H1 (cell line): ENCODE measurements at regions of chr3 and their contacts with region 1.

Region 1: GRCh38 chr3:141386611-141387111 is 18.4 kb downstream of the ZBTB38 start:
- DNase-seq: no peak
- H3K4me3 ChIP-seq: no peak overlapping the region
- H3K27ac ChIP-seq: no peak overlapping the region
- H3K4me1 ChIP-seq: peaks cover 0 to 11% (median 5%) of the 10 kb centered on the region in 4 experiments; a peak in 4 of 7 replicates
- H3K27me3 ChIP-seq: no peaks in the 10 kb centered on the region
- CTCF ChIP-seq: no peak
- EP300 ChIP-seq: no peak
- POLR2A ChIP-seq: no peak
- RAD21 ChIP-seq: no peak

Region 2: GRCh38 chr3:141370065-141370533 is 16.6 kb before region 1 on chr3:
- CTCF ChIA-PET with region 1: interaction called, 15 read pairs
- POLR2A ChIA-PET with region 1: interaction called, 4 read pairs
- DNase-seq: no peak
- H3K4me3 ChIP-seq: no peak overlapping the region
- H3K27ac ChIP-seq: no peak overlapping the region
- H3K4me1 ChIP-seq: peaks cover 2 to 13% (median 8%) of the 10 kb centered on the region in 4 experiments
- H3K27me3 ChIP-seq: no peaks in the 10 kb centered on the region
- CTCF ChIP-seq: peak; percentile 5 to 50 (median 35)
- EP300 ChIP-seq: 0 out of 3 replicates have a peak, but pooled peaks of 1 of the 2 experiments have one; percentile 31
- POLR2A ChIP-seq: no peak
- RAD21 ChIP-seq: peak; percentile 21 to 46; a peak in 2 of 4 replicates

Region 3: DNA sequence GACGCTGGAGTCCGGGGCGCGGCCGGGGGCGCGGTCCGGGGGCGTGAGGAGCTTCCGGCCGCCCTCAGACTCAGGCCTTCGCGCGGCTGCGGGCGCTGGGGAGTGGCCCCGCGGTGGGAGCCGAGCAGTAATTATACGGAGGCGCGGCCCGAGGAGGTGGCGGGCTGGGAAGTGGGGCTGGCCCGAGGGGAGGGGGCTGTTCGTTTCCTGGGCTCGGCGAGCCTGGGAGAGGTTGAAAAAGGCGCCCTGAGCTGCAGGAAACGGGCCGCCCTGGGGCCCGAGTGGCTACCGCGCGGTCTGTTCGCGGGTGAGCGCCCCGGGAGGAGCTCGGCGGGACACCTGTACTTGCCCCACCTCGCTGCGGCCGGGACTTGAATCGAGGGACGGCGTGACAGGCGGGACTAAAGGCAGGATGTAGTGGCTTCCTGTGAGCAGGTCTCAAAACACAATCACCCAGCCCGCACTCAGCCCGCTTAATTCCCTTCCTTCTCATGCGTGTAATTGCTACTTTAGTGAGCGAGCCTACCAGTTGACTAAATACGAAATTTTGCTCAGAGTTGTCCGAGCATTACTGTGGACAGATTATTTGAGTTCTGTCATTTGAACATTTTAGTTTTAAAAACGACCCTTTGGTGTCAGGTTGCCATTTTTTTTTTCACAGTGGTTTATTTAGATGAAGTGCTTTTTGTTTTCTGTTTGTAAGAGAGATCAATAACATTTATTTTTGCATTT is 101.0 kb after region 1 on chr3:
- CTCF ChIA-PET with region 1: no interaction called
- POLR2A ChIA-PET with region 1: no interaction called
- DNase-seq: peak; percentile 23 to 82
- H3K4me3 ChIP-seq: peak overlapping the region; percentile 63 to 74 (median 73)
- H3K27ac ChIP-seq: peak overlapping the region; percentile 88
- H3K4me1 ChIP-seq: peaks cover 3 to 20% (median 11%) of the 10 kb centered on the region in 4 experiments; a peak in 6 of 7 replicates
- H3K27me3 ChIP-seq: no peaks in the 10 kb centered on the region
- CTCF ChIP-seq: no peak
- EP300 ChIP-seq: no peak
- POLR2A ChIP-seq: peak in 1 of 2 experiments; percentile 28; a peak in 1 of 3 replicates
- RAD21 ChIP-seq: no peak

Region 4: GRCh38 chr3:141498598-141499223 is 112.0 kb after region 1 on chr3:
- CTCF ChIA-PET with region 1: no interaction called
- POLR2A ChIA-PET with region 1: no interaction called
- DNase-seq: no peak
- H3K4me3 ChIP-seq: no peak overlapping the region
- H3K27ac ChIP-seq: no peak overlapping the region
- H3K4me1 ChIP-seq: no peaks in the 10 kb centered on the region
- H3K27me3 ChIP-seq: no peaks in the 10 kb centered on the region
- CTCF ChIP-seq: no peak
- EP300 ChIP-seq: no peak
- POLR2A ChIP-seq: no peak
- RAD21 ChIP-seq: no peak

Region 5: DNA sequence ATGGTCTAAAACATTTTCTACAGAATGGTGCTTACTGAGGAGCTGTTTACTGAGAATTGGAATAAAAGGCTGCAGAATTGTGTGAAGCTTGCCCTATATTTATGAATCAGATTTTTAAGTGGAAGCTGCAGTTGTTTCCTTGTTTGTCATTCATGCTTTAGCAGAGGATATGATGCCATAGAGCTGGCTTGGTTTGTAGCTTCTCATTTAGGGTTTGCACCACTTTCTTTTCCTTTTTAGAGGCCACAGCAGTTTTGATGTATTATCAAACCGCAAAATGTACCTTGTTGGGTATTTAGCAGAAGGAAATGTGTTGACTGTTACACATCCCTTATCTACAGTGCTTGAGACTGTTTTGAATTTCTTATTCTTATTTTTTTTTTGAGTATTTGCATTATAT is 166.4 kb after region 1 on chr3:
- CTCF ChIA-PET with region 1: no interaction called
- POLR2A ChIA-PET with region 1: no interaction called
- DNase-seq: no peak
- H3K4me3 ChIP-seq: no peak overlapping the region
- H3K27ac ChIP-seq: no peak overlapping the region
- H3K4me1 ChIP-seq: no peaks in the 10 kb centered on the region
- H3K27me3 ChIP-seq: no peaks in the 10 kb centered on the region
- CTCF ChIP-seq: no peak
- EP300 ChIP-seq: no peak
- POLR2A ChIP-seq: no peak
- RAD21 ChIP-seq: no peak